Mammary epithelial cell (primary cell): ENCODE measurements at regions of chr14 and their contacts with region 1.

Region 1: DNA sequence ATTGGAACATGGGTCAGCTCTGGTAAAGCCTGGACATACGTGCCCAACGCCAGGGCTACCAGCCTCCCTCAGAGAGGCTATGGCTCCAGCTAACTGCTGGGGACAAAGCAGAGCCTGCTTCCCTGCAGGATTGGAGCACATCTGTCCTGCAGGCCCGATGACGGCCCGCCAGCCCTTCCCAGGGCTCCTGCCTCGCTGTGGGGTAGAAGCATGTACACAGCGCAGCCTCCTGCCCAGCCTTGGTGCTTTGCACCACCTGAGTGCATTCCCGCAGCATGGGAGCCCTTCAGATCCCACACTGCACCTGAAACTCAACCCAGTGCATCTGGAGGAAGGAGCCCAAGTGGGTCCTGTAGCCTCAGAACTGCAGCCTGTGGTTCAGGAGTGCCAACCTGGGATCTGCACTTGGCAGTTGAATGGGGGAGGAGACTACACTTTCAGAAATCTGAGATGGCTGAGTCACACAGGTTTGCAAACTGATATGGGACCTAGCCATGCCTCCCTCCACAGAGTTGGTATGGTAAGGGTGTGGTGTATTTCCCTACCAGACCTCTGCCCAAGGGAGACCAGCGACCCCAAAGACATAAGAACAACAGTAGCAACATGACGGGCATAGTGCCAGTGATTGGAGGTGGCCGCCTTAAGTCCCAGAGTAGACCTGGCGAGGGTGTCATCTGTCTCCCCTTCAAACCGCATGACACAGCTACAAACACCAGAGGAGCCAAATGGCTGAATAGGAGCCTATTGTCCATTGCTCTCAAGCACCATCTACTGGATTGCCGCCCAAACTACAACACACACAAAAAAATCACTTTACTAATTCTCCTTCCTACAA is 273.9 kb upstream of the MIS18BP1 start:
- DNase-seq: peak; percentile 45
- H3K4me3 ChIP-seq: no peak overlapping the region
- H3K27ac ChIP-seq: no peak overlapping the region
- H3K4me1 ChIP-seq: no peaks in the 10 kb centered on the region
- H3K27me3 ChIP-seq: no peaks in the 10 kb centered on the region
- CTCF ChIP-seq: peak; percentile 70 to 77

Region 2: DNA sequence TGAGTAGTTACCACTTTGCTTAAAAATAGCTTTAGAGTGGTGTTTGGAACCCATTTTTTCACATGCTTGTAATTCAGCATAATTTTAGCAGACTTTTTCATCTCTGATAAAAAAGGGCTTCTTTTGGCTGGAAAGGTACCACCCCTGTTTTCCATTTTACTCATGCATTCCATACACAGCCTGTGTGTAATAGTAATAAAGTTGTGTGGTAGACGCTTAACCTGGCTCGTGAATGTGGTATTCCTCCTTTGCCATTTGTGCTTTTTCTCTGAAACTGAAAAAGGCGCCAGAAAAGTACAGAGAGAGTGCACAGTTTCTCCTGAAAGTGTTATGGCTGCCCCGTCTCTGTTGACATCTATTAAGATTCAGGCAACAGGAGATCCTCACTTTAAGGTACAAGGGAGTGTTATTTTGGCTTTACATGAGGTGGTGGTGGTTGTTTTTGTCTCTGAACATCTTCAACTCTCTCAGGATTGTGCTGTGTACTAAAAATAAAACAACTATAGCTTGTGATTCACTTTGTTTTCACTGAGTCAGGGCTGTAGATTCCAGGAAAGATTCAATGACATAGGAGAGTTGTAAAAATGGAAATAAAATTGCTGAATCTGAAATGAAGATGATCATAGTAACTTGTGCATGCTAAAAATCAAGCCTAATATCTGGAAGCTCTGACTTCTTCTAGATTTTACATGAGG is 228.4 kb before region 1 on chr14:
- CTCF ChIA-PET with region 1: no interaction called
- dilution Hi-C with region 1: no loop called
- in situ Hi-C with region 1: no loop called
- intact Hi-C with region 1: loop called (anchors 10 kb)
- DNase-seq: no peak
- H3K4me3 ChIP-seq: no peak overlapping the region
- H3K27ac ChIP-seq: no peak overlapping the region
- H3K4me1 ChIP-seq: no peaks in the 10 kb centered on the region
- H3K27me3 ChIP-seq: peaks cover 2% of the 10 kb centered on the region
- CTCF ChIP-seq: no peak

Region 3: DNA sequence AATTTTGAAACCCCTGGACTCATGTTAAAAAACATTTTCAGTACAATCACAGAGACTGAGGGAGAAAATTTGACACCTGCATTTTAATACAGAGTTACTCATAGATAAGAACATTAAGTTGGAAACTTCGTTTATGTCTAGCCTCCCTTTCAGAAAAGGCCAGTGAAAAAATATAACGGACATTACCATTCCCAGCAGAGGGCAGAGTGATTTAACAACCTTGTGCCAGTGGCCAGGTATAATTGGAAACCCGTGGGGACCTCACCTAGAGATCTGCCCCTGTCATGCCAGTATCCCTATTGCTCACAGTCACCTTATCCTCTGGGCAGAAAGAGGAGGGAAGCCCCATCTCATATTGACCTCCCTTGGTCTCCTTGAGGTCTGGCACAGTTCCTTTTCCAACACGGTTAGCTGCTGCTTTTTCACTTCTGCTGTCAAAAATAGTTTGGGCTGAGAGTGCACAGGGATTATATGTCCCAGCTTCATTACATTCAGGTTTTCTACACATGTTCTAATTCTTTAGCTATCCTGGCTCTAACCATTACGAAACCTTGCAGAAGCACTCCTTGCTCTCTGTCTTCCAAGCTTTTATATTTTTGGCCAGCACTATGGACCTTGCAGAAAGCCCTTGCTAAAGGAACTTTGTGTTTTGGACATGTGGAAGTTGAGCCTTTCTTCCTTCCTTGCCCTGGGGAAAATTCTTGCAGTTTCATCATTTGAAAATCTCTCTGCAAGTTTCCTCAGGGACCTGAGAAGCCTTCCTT is 162.4 kb before region 1 on chr14:
- CTCF ChIA-PET with region 1: no interaction called
- dilution Hi-C with region 1: no loop called
- in situ Hi-C with region 1: no loop called
- intact Hi-C with region 1: loop called (anchors 5 kb)
- DNase-seq: no peak
- H3K4me3 ChIP-seq: no peak overlapping the region
- H3K27ac ChIP-seq: no peak overlapping the region
- H3K4me1 ChIP-seq: no peaks in the 10 kb centered on the region
- H3K27me3 ChIP-seq: no peaks in the 10 kb centered on the region
- CTCF ChIP-seq: peak in 1 of 2 donors; percentile 7

Region 4: GRCh38 chr14:45426670-45427282 is 100.2 kb before region 1 on chr14:
- CTCF ChIA-PET with region 1: no interaction called
- dilution Hi-C with region 1: no loop called
- in situ Hi-C with region 1: loop called in 1 of 2 experiments (anchors 5 kb)
- intact Hi-C with region 1: loop called (anchors 1 kb)
- DNase-seq: peak; percentile 49
- H3K4me3 ChIP-seq: no peak overlapping the region
- H3K27ac ChIP-seq: no peak overlapping the region
- H3K4me1 ChIP-seq: no peaks in the 10 kb centered on the region
- H3K27me3 ChIP-seq: no peaks in the 10 kb centered on the region
- CTCF ChIP-seq: peak; percentile 47 to 67

Region 5: DNA sequence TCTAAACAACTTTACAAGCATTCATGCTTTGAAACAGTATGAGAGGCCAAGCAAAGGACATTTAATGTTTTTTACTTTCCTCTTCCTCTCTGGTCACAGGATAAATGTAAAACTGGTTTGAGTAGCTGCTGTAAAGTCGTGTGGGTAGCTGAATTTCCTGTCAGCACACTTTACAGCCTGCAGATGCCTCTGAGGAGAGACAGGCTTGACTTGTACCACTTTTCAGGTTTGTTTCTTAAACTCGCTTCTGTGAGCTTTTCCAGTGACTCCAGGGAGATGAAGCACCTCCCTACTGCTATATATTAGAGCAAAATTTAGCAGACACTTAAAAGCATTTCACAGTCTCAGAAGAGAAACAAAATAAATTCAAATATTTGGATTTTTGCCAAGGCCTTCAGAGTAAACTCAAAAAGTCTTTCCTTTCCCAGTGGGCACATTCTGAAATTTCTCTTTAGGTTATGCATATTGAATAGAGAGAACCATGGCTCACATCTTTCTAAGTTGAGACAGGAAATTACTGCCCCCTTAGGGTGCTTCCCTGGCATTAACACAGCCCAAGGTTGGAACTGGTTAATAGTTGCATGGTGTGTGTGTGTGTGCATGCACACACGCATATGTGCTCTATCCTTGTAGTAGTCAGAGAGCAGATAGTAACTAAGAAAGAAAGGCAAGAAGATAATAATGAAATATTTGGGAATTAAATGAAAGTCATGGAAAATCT is 283.4 kb after region 1 on chr14:
- CTCF ChIA-PET with region 1: no interaction called
- dilution Hi-C with region 1: no loop called
- in situ Hi-C with region 1: no loop called
- intact Hi-C with region 1: no loop called
- DNase-seq: no peak
- H3K4me3 ChIP-seq: no peak overlapping the region
- H3K27ac ChIP-seq: no peak overlapping the region
- H3K4me1 ChIP-seq: peaks cover 7% of the 10 kb centered on the region
- H3K27me3 ChIP-seq: no peaks in the 10 kb centered on the region
- CTCF ChIP-seq: peak; percentile 45 to 62